ENCODE measurements at regions of chr1 and their contacts with region 1.

Region 1: GRCh38 chr1:230310381-230311163 is 115.6 kb downstream of the PGBD5 start:
- DNase-seq: peak; percentile 51
- H3K4me3 ChIP-seq: no peak overlapping the region
- H3K27ac ChIP-seq: no peak overlapping the region
- H3K4me1 ChIP-seq: peaks cover 13% of the 10 kb centered on the region
- H3K27me3 ChIP-seq: no peaks in the 10 kb centered on the region
- CTCF ChIP-seq: peak; percentile 85 to 94

Region 2: DNA sequence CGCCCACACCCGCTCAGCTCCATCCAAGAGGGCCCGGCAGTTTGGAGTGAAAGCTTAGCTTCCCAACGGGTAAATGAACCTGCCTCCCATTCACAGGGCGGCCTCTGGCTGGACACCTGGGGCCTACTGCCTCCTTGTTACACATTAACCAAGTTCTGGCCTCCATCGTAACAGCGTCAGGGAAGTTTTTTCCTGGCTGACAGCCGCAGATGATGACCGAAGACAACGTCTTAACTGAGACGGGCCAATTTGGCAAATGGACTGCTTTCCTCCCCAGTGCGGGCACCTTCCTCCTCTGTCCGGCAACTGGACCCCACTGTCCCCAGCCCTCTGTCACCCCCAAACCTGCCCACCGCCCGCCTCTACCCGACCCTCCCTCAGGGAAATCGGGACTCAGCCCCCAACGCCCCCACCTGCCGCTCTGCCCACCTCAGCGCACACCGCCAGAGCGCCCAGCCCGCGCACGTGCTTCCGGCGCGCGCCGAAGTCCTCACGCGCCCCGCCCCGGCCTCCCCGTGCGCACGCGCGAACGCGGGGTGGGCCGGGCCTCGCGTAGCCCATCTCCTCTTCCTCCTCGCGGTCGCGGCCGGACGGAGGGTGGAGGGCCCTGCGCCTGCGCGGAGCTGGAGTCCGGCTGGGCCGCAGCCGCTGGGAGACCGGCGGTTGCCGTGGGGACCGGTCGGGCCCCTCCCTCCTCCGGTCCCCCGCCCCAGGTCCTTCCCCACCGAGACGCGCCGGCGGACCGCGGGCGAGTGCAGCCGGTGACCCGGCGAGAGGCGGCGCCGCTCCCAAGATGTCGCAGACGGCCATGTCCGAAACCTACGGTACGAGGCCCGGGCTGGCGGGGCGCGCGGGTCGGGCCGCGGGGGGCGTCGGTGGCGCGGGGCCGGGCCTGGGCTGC is 1039.8 kb before region 1 on chr1 and contains the start of gene RAB4A:
- CTCF ChIA-PET with region 1: no interaction called
- dilution Hi-C with region 1: no loop called
- in situ Hi-C with region 1: loop called in 1 of 2 experiments (anchors 25 kb)
- intact Hi-C with region 1: no loop called
- DNase-seq: peak; percentile 81
- H3K4me3 ChIP-seq: peak within 1 kb of the TSS; percentile 63 to 78 (median 77)
- H3K27ac ChIP-seq: peak within 1 kb of the TSS; percentile 76
- H3K4me1 ChIP-seq: peaks cover 40% of the 10 kb centered on the region
- H3K27me3 ChIP-seq: no peaks in the 10 kb centered on the region
- CTCF ChIP-seq: no peak
- total RNA-seq, gene RAB4A: 46.5 to 59.2 TPM

Region 3: DNA sequence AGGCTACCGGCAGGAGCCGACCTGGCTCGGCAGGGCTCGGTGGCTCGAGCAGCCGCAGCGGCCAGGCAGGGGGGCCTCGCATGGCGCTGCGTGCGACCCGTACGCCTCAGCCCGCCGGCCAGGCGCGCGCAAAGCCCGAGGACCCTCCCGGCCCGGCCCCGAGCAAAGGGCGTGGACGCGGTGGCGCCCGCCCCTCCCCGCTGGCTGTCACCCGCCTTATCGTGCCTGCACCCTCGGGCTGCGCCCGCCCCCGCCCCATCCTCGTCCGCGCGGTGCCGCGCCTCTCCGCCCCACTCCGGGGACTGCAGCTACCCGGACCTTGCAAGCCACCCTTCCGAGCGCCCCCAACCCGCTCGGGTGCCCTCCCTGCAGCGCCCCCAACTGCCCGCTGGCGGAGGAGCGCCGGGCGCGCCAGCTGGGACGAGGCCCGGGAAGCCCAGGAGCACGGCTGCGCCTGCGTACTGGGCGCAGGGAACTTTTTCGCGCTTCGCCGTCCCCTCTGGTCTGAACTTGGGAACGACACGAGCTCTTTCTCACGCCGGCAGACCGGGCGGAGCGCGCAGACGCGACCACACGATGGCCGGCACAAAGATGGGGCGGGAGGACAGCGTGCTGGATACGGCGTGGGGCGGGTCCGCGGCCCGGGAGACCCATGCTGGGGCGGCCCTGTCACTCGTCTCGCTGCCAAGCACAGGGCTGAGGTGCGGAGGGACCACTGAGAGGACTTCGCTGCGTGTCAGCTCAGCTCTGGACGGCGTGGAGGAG is 751.8 kb before region 1 on chr1 and contains the start of gene ABCB10:
- CTCF ChIA-PET with region 1: no interaction called
- dilution Hi-C with region 1: no loop called
- in situ Hi-C with region 1: no loop called
- intact Hi-C with region 1: loop called (anchors 5 kb)
- DNase-seq: peak; percentile 96
- H3K4me3 ChIP-seq: peak within 1 kb of the TSS; percentile 69 to 82 (median 81)
- H3K27ac ChIP-seq: peak within 1 kb of the TSS; percentile 36
- H3K4me1 ChIP-seq: peaks cover 12% of the 10 kb centered on the region
- H3K27me3 ChIP-seq: no peaks in the 10 kb centered on the region
- CTCF ChIP-seq: peak; percentile 63 to 91
- total RNA-seq, gene ABCB10: 20.2 to 22.7 TPM

Region 4: DNA sequence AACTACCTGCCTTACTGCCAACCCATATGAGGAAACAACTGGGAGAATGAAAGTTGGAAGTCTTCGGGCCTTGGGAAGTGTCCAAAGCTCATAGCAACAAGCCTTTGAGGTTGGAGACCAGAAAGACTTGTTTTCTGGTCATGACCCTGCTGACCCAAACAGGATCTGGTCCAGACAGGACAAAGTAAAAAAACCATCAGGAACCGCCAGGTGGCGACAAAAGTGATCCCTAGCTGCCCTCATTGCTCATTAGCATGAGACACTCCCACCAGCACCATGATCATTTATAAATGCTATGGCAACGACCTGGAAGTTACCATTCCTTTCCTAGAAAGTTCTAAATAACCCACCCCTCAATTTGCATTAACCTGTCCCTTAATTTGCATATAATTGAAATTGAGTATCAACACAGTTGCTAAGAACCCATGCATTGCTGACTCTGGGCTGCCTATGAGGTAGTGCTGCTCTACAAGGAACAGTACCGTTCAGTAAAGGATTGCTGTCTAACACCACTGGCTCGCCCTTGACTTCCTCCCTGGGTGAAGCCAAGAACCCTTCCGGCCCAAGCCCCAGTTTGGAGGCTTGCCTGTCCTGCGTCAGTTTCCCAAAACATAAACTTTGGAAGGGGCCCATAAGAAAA is 595.5 kb before region 1 on chr1:
- CTCF ChIA-PET with region 1: no interaction called
- dilution Hi-C with region 1: no loop called
- in situ Hi-C with region 1: no loop called
- intact Hi-C with region 1: loop called (anchors 2 kb)
- DNase-seq: peak; percentile 32
- H3K4me3 ChIP-seq: no peak overlapping the region
- H3K27ac ChIP-seq: no peak overlapping the region
- H3K4me1 ChIP-seq: no peaks in the 10 kb centered on the region
- H3K27me3 ChIP-seq: no peaks in the 10 kb centered on the region
- CTCF ChIP-seq: peak; percentile 38 to 60

Region 5: DNA sequence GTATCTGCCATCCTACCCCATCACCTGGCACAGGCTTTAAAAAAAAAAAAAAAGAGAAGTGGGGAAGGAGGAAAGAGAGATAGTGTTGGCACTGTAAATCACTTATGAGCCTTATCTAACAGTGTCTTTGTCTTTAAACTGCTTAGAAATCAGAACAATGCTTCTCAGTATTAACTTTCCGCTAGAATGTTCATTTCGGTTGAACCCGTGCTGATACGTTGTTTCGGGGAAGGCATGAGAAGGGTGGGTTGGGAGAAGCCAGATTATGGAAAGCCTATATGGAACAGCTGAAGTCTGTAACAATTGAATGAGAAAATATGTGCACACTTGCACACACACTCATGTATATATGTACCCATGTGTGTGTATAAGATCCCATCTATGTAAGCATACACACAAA is 72.8 kb before region 1 on chr1:
- CTCF ChIA-PET with region 1: interaction called, 16 read pairs
- dilution Hi-C with region 1: no loop called
- in situ Hi-C with region 1: no loop called
- intact Hi-C with region 1: no loop called
- DNase-seq: no peak
- H3K4me3 ChIP-seq: no peak overlapping the region
- H3K27ac ChIP-seq: no peak overlapping the region
- H3K4me1 ChIP-seq: no peaks in the 10 kb centered on the region
- H3K27me3 ChIP-seq: no peaks in the 10 kb centered on the region
- CTCF ChIP-seq: no peak

Measured in mammary epithelial cell (primary cell).